Activated T-helper 2 cell treated with anti-CD3 and anti-CD28 coated beads, Interferon-gamma antibody, Interleukin-2, Interleukin-4, amounts not matched to agents 10 μg/mL and 5 μg/mL and 100 μg/mL, durations not matched to agents 14 hours and 24 hours and 36 hours (primary cell): ENCODE measurements at regions of chr10 and their contacts with region 1.

Region 1: GRCh38 chr10:43128958-43129706 is 9.1 kb upstream of the CSGALNACT2 start:
- DNase-seq: peak; percentile 32
- H3K4me3 Mint-ChIP-seq: no peak overlapping the region
- H3K27ac Mint-ChIP-seq: peak overlapping the region; percentile 86
- H3K4me1 Mint-ChIP-seq: peaks cover 46% of the 10 kb centered on the region
- H3K27me3 Mint-ChIP-seq: no peaks in the 10 kb centered on the region

Region 2: DNA sequence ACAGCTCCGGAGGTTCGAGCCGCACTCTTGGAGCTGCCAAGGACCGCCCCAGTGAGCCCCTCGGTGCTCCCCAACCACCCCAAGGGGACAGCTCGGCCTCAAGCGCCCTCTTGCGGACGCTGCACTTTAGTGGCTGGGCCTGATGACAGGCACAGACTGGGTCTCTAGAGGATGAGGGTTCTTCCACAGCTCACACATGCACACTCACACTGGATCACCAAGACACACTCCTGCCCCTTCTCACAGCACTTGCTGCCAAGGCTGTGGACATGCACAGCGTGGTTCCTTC is 50.2 kb before region 1 on chr10:
- intact Hi-C with region 1: no loop called
- DNase-seq: peak; percentile 13
- H3K4me3 Mint-ChIP-seq: peak overlapping the region; percentile 47
- H3K27ac Mint-ChIP-seq: no peak overlapping the region
- H3K4me1 Mint-ChIP-seq: peaks cover 6% of the 10 kb centered on the region
- H3K27me3 Mint-ChIP-seq: peaks cover 40% of the 10 kb centered on the region

Region 3: DNA sequence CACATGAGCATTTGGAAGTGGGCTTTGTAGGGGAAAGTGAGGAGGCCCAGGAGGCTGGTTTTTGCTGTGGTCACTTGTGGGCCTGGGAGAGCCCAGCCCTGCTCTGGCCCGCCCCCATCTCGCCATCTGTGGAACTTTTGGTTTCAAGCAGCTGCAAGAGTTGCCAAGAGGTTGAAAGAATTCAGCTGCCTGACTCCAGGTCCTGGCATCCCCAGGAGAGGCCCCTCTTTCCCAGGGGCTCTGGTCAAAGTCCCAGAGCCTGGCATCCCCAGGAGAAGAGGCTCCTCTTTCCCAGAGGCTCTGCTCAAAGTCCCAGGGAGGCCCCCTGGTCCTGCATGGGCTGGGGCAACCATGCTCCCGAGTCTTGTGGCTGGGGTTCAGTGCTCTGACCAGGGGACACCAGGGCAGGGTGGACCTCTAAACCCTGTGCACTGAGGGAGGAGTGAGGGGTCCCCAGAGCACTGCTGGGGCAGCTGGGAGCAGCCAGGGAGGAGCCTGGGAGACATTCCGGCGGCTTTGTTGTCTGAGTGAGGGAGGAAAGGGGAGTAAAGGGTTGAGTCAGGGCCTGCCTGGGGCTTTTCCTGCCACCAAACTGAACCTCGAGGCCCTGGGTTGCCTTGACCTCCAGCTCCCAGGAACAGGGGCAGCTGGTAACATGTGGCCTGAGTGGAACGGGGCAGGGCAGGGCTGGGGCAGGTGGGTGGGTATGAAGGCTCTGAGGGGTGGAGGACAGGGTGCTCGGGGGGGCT is 18.6 kb before region 1 on chr10:
- intact Hi-C with region 1: no loop called
- DNase-seq: no peak
- H3K4me3 Mint-ChIP-seq: no peak overlapping the region
- H3K27ac Mint-ChIP-seq: no peak overlapping the region
- H3K4me1 Mint-ChIP-seq: peaks cover 3% of the 10 kb centered on the region
- H3K27me3 Mint-ChIP-seq: no peaks in the 10 kb centered on the region

Region 4: GRCh38 chr10:43160046-43160918 is 31.1 kb after region 1 on chr10:
- intact Hi-C with region 1: loop called (anchors 5 kb)
- DNase-seq: no peak
- H3K4me3 Mint-ChIP-seq: no peak overlapping the region
- H3K27ac Mint-ChIP-seq: peak overlapping the region; percentile 93
- H3K4me1 Mint-ChIP-seq: peaks cover 44% of the 10 kb centered on the region
- H3K27me3 Mint-ChIP-seq: no peaks in the 10 kb centered on the region

Region 5: GRCh38 chr10:43170491-43170890 is 41.4 kb after region 1 on chr10:
- intact Hi-C with region 1: no loop called
- DNase-seq: no peak
- H3K4me3 Mint-ChIP-seq: no peak overlapping the region
- H3K27ac Mint-ChIP-seq: no peak overlapping the region
- H3K4me1 Mint-ChIP-seq: peaks cover 32% of the 10 kb centered on the region
- H3K27me3 Mint-ChIP-seq: no peaks in the 10 kb centered on the region